ENCODE measurements at regions of chr9 and their contacts with region 1.

Region 1: DNA sequence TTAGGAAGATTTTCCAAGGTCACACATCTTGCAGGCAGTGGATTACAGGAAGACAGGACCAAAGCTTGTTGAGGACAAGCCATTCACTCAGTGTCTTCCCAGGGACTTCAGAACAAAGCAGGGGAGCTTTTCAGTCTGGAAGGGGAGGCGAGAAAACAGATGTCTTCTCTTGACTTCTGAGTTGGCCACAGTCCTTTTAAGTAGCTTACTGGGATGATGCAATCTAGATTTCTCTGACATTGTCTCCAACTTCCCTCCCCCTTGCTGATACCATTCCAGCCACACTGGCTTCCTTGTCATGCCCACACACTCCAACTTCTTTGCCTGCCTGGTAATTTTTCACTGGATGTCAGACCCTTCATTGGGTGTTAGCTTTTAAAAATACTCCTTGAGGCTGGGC is 174.2 kb upstream of the TBC1D2 start:
- DNase-seq: no peak
- H3K4me3 ChIP-seq: no peak overlapping the region
- H3K27ac ChIP-seq: no peak overlapping the region
- H3K4me1 ChIP-seq: no peaks in the 10 kb centered on the region
- H3K27me3 ChIP-seq: no peaks in the 10 kb centered on the region
- CTCF ChIP-seq: no peak

Region 2: GRCh38 chr9:98365227-98365669 is 64.4 kb before region 1 on chr9:
- CTCF ChIA-PET with region 1: no interaction called
- dilution Hi-C with region 1: no loop called
- in situ Hi-C with region 1: no loop called
- intact Hi-C with region 1: no loop called
- DNase-seq: peak; percentile 29
- H3K4me3 ChIP-seq: no peak overlapping the region
- H3K27ac ChIP-seq: no peak overlapping the region
- H3K4me1 ChIP-seq: no peaks in the 10 kb centered on the region
- H3K27me3 ChIP-seq: peaks cover 4% of the 10 kb centered on the region
- CTCF ChIP-seq: peak; percentile 59 to 83

Region 3: GRCh38 chr9:98504298-98505282 is 75.0 kb after region 1 on chr9:
- CTCF ChIA-PET with region 1: no interaction called
- dilution Hi-C with region 1: loop called (anchors 5 kb)
- in situ Hi-C with region 1: no loop called
- intact Hi-C with region 1: no loop called
- DNase-seq: no peak
- H3K4me3 ChIP-seq: no peak overlapping the region
- H3K27ac ChIP-seq: no peak overlapping the region
- H3K4me1 ChIP-seq: no peaks in the 10 kb centered on the region
- H3K27me3 ChIP-seq: no peaks in the 10 kb centered on the region
- CTCF ChIP-seq: no peak

Region 4: GRCh38 chr9:98654247-98654646 is 224.6 kb after region 1 on chr9:
- CTCF ChIA-PET with region 1: no interaction called
- dilution Hi-C with region 1: no loop called
- in situ Hi-C with region 1: no loop called
- intact Hi-C with region 1: no loop called
- DNase-seq: no peak
- H3K4me3 ChIP-seq: no peak overlapping the region
- H3K27ac ChIP-seq: no peak overlapping the region
- H3K4me1 ChIP-seq: no peaks in the 10 kb centered on the region
- H3K27me3 ChIP-seq: no peaks in the 10 kb centered on the region
- CTCF ChIP-seq: no peak

Measured in mammary epithelial cell (primary cell).